Head of caudate nucleus (tissue), 42 donors: ENCODE measurements at regions of chr1 and their contacts with region 1.

Region 1: DNA sequence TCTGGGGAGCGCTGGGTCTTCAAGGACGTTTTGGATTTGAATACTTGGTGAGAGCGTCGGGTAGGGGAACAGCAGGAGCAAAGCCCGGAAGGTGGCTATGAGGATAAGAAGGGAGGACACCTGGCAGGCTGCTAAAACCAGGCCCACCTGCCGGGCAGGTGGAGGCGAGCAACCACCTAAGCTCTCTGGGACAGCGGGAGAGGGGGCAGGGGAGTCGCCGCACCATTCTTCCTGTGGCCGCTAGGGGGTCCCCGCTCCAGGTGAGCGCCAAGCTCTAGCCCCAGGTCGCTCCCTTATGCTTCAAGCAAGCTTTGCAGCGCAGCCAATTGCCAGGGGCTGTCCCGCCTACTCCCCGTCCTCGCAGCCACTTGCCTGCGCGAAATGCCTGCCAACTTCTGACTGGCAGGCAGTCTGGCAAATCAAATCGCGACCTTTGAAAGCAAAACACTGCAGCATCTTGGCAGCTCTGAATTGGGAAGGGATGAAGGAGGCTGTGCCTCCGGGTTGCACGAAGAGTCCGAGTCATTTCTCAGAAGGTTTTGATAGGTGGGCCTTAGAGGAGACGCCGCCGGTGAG is at the start of gene NIPAL3:
- DNase-seq: peak; percentile 95 to 99 (median 98)

Region 2: GRCh38 chr1:24513706-24514105 is 98.3 kb after region 1 on chr1:
- intact Hi-C with region 1: no loop called
- DNase-seq: no peak

Region 3: GRCh38 chr1:24635195-24635843 is 219.9 kb after region 1 on chr1:
- intact Hi-C with region 1: loop called (anchors 10 kb)
- DNase-seq: peak in 7 of 42 donors; percentile 21 to 71 (median 54)